ENCODE measurements at regions of chr16 and their contacts with region 1.

Region 1: DNA sequence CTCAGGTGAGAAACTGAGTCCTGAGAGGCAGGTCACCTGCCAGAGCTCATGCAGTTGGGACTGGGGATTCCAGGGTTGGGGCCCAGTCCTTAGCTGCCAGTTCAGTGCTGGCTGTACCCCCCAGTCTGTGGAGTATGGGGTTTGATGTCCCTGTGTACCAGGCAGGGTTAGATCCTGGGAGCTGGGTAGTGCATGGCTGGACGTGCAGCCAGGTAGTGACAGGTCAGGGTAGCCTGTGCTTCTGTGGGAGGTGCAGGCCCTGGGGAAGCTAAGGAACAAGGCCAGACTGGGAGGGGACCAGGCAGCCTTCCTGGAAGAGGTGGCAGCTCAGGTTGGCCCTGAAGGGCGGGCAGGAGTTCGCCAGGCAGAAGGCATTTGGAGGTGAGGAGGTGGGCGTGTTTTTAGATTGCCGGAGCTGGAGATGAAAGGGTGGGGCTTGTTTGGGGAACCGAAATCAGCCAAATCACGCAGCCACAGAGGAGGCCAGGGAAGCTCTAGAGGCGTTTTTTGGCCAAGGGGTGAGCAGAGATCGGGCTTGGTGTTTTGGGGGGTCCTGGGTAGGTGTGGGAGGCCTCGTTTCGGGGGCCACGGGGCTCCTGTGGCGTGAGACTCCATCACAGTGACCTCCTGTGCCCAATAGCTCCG is 7.5 kb downstream of the ADCY7 start:
- DNase-seq: peak; percentile 68
- ATAC-seq: peak; percentile 28
- H3K4me3 Mint-ChIP-seq: peak overlapping the region; percentile 93
- H3K27ac Mint-ChIP-seq: peak overlapping the region; percentile 100
- H3K4me1 Mint-ChIP-seq: peaks cover 94% of the 10 kb centered on the region
- H3K27me3 Mint-ChIP-seq: no peaks in the 10 kb centered on the region
- CTCF ChIP-seq: no peak

Region 2: GRCh38 chr16:50245417-50246298 is 28.1 kb before region 1 on chr16:
- CTCF ChIA-PET with region 1: interaction called, 4 read pairs
- POLR2A ChIA-PET with region 1: interaction called, 18 read pairs
- intact Hi-C with region 1: no loop called
- DNase-seq: peak; percentile 92
- ATAC-seq: peak; percentile 94
- H3K4me3 Mint-ChIP-seq: peak overlapping the region; percentile 79
- H3K27ac Mint-ChIP-seq: peak overlapping the region; percentile 86
- H3K4me1 Mint-ChIP-seq: peaks cover 13% of the 10 kb centered on the region
- H3K27me3 Mint-ChIP-seq: no peaks in the 10 kb centered on the region
- CTCF ChIP-seq: peak; percentile 36

Region 3: DNA sequence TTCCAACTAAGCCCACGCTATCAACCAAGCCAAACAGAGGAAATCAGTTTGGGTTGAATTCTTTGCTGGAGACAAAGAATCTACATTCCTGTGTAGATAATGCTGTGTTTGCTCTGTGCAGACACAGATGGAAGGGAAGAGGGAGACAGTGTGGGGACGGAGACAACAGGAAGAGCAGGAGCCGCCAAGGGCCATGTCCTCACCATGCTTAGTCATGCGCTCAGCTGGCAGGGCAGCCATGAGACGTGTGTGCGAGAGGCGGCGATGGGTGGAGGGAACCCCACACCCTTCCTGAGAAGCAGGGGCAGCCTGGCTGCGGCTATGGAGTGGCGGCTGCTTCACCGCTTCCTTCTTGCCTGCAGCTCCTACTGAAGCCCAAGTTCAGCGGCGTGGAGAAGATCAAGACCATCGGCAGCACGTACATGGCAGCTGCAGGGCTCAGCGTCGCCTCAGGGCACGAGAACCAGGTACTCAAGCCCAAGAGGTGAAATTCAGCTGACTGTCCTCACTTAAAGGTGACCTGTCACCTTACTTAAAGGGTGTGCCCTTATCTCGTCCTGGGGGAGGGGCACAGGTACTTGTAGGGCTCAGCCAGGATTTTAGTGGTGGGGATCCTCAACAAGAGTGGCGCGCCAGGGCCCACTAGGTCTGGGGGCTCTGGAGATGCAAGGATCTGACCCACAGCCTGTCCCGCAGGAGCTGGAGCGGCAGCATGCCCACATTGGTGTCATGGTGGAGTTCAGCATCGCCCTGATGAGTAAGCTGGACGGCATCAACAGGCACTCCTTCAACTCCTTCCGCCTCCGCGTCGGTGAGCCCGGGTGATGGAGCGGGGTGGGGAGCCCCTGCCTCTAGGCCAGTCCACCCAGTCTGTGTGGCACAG is 40.0 kb after region 1 on chr16:
- CTCF ChIA-PET with region 1: interaction called, 3 read pairs
- POLR2A ChIA-PET with region 1: no interaction called
- intact Hi-C with region 1: loop called (anchors 5 kb)
- DNase-seq: peak; percentile 66
- ATAC-seq: peak; percentile 79
- H3K4me3 Mint-ChIP-seq: no peak overlapping the region
- H3K27ac Mint-ChIP-seq: peak overlapping the region; percentile 91
- H3K4me1 Mint-ChIP-seq: peaks cover 23% of the 10 kb centered on the region
- H3K27me3 Mint-ChIP-seq: no peaks in the 10 kb centered on the region
- CTCF ChIP-seq: no peak

Region 4: GRCh38 chr16:50335196-50335958 is 61.6 kb after region 1 on chr16:
- CTCF ChIA-PET with region 1: interaction called, 3 read pairs
- POLR2A ChIA-PET with region 1: interaction called, 6 read pairs
- intact Hi-C with region 1: loop called (anchors 5 kb)
- DNase-seq: peak; percentile 77
- ATAC-seq: peak; percentile 71
- H3K4me3 Mint-ChIP-seq: peak overlapping the region; percentile 64
- H3K27ac Mint-ChIP-seq: peak overlapping the region; percentile 98
- H3K4me1 Mint-ChIP-seq: peaks cover 56% of the 10 kb centered on the region
- H3K27me3 Mint-ChIP-seq: no peaks in the 10 kb centered on the region
- CTCF ChIP-seq: no peak

Measured in activated CD8-positive, alpha-beta T cell treated with anti-CD3 and anti-CD28 coated beads for 36 hours (primary cell).